ENCODE measurements at regions of chr10 and their contacts with region 1.

Region 1: GRCh38 chr10:112140110-112140970 is 43.2 kb downstream of the GPAM start:
- DNase-seq: peak; percentile 77
- H3K4me3 Mint-ChIP-seq: no peak overlapping the region
- H3K27ac Mint-ChIP-seq: no peak overlapping the region
- H3K4me1 Mint-ChIP-seq: peaks cover 3% of the 10 kb centered on the region
- H3K27me3 Mint-ChIP-seq: peaks cover 1% of the 10 kb centered on the region

Region 2: GRCh38 chr10:111996103-111996502 is 144.2 kb before region 1 on chr10:
- CTCF ChIA-PET with region 1: no interaction called
- POLR2A ChIA-PET with region 1: no interaction called
- DNase-seq: no peak
- H3K4me3 Mint-ChIP-seq: no peak overlapping the region
- H3K27ac Mint-ChIP-seq: no peak overlapping the region
- H3K4me1 Mint-ChIP-seq: no peaks in the 10 kb centered on the region
- H3K27me3 Mint-ChIP-seq: no peaks in the 10 kb centered on the region

Region 3: DNA sequence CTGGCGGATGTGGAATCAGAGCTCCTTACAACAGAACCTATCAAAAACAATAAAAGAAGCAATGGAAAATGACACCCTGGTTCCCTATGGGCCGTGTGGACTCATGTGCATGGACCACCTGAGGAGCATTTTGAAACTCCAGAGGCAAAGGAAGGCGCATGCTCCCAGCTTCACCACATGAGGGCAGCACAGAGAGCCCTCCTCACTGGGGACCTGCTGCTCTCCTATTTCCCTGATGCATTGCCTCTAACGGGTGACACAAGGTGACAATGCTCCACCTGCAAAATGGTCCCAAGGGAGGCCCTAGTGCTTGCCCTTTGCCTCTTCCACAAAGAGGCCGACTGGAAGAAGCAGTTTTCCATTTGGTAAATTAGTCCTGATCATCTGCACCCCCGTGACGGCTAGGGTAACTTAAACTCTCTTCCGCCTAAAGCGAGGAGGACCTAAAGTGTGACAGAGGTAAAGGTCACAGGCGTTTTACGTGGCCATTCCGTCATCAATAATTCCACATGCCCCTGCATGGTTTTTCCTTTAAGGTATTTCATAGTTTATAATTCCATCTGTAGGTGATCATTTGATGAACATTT is 24.4 kb before region 1 on chr10:
- CTCF ChIA-PET with region 1: interaction called, 19 read pairs
- POLR2A ChIA-PET with region 1: no interaction called
- DNase-seq: peak; percentile 40
- H3K4me3 Mint-ChIP-seq: no peak overlapping the region
- H3K27ac Mint-ChIP-seq: no peak overlapping the region
- H3K4me1 Mint-ChIP-seq: no peaks in the 10 kb centered on the region
- H3K27me3 Mint-ChIP-seq: peaks cover 6% of the 10 kb centered on the region

Region 4: DNA sequence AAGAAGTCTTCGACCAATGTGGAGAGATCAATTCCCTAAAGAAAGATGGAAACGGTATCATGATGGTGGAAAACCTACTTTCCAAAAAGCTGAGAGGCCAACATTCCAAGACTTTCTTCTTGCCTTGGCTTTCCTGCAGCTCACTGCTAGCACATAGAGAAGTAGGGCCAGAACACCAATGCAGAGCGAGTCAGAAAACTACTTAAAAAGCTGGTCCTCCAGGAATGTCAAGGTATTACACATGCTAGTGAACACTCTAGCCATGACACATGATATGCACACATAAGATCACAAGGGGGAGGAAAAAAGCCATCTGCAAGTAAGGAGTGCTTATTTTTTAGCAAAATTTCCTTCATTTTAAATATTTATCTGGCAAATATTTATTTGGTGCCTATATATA is 20.5 kb after region 1 on chr10:
- CTCF ChIA-PET with region 1: interaction called, 23 read pairs
- POLR2A ChIA-PET with region 1: no interaction called
- DNase-seq: no peak
- H3K4me3 Mint-ChIP-seq: no peak overlapping the region
- H3K27ac Mint-ChIP-seq: no peak overlapping the region
- H3K4me1 Mint-ChIP-seq: no peaks in the 10 kb centered on the region
- H3K27me3 Mint-ChIP-seq: no peaks in the 10 kb centered on the region

Region 5: DNA sequence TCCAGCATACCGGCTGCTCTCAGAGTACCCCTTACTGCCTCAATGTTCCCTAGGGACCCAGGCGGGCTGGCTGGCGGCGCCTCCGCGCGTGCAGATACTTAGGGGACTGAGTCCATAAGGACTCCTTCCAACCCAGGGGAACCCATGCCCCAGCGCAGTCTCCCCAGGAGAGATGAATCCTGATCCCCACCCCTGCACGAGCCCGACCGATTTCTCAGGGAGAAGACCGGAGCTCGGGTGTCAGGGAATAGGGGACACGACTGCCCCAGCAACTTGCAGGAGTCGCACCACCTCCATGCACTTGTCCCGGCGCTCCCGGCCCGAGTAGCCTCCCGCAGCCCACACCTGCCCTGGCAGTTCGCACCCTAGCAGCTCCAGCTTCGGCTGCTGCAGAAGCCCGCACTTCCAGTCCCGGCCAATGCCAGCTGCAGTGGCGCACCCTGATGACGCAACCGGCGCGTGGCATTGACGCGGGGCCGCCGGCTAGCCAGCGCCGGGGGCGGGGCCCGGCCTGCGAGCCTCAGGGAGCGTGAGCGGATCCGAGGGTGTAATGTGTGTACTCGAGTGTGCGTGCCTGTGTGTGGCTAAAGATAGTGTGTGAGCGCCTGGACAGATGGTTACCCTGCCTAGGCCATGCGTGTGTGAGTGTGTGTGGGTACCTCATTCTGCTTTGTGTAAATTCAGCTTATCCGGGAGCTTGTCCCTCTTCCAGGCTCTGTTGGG is 43.1 kb after region 1 on chr10 and contains the start of gene GPAM:
- CTCF ChIA-PET with region 1: interaction called, 15 read pairs
- POLR2A ChIA-PET with region 1: no interaction called
- DNase-seq: peak; percentile 98
- H3K4me3 Mint-ChIP-seq: peak within 1 kb of the TSS; percentile 93
- H3K27ac Mint-ChIP-seq: peak within 1 kb of the TSS; percentile 81
- H3K4me1 Mint-ChIP-seq: peaks cover 34% of the 10 kb centered on the region
- H3K27me3 Mint-ChIP-seq: peaks cover 6% of the 10 kb centered on the region
- total RNA-seq, gene GPAM: 3.8 to 5.5 TPM

Region 6: GRCh38 chr10:112314822-112315474 is 174.6 kb after region 1 on chr10:
- CTCF ChIA-PET with region 1: interaction called, 10 read pairs
- POLR2A ChIA-PET with region 1: no interaction called
- DNase-seq: peak; percentile 74
- H3K4me3 Mint-ChIP-seq: no peak overlapping the region
- H3K27ac Mint-ChIP-seq: no peak overlapping the region
- H3K4me1 Mint-ChIP-seq: no peaks in the 10 kb centered on the region
- H3K27me3 Mint-ChIP-seq: peaks cover 35% of the 10 kb centered on the region